ENCODE measurements at regions of chr11 and their contacts with region 1.

Region 1: GRCh38 chr11:62875698-62876478 is 4.8 kb upstream of the SLC3A2 start:
- DNase-seq: no peak
- ATAC-seq: no peak
- H3K4me3 ChIP-seq: no peak overlapping the region
- H3K27ac ChIP-seq: no peak overlapping the region
- H3K4me1 ChIP-seq: peaks cover 14% of the 10 kb centered on the region
- CTCF ChIP-seq: no peak
- EP300 ChIP-seq: no peak
- POLR2A ChIP-seq: no peak
- RAD21 ChIP-seq: no peak

Region 2: DNA sequence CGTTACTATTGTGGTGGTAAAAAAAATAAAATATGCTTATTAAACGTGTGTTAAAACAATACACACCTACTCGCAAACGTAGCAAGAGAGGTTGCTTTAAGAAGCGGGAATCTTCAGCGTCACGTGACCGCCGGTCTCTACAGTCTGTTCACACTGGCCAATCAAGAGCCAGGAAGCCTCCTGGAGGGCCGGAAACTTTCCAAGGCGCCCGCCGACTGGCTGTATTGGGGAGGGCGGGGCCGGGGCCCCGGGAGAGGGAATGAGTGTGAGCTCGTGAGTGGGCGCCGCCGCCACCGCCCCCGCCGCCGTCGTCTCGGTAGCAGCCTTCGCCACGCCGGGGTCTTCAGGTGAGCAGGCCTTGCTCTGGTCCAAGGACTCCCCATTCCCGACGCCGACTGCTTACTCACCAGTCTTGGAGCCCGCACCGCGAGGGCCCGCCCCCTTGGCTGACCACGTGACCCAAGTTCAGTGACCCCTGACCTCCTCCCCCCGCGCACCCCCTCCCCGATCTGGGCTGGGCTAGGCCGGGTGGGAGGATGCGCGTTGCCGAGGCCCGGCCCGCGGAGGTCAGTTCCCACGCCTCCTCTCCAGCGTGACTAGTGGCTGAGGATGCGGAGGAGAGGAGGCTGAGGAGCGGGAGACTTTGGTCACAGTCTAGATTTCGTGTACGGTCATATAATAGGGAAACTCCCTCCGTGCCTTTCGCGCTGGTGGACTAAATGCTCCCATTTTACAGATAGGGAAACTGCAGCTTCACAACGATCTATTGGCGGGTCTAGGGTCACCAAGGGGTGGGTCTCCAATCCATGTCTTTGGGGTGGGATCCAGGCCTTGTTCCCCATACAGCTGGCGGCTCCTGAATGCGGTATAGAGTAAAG is 104.5 kb before region 1 on chr11 and contains the start of gene TAF6L:
- CTCF ChIA-PET with region 1: no interaction called
- POLR2A ChIA-PET with region 1: no interaction called
- DNase-seq: peak; percentile 97 to 98
- ATAC-seq: peak; percentile 96 to 97
- H3K4me3 ChIP-seq: peak within 1 kb of the TSS; percentile 78
- H3K27ac ChIP-seq: peak within 1 kb of the TSS; percentile 93 to 94
- H3K4me1 ChIP-seq: peaks cover 15% of the 10 kb centered on the region
- CTCF ChIP-seq: no peak
- EP300 ChIP-seq: no peak
- POLR2A ChIP-seq: peak; percentile 55
- RAD21 ChIP-seq: no peak
- polyA plus RNA-seq, gene TAF6L: 14.0 and 17.5 TPM in 2 replicates

Region 3: DNA sequence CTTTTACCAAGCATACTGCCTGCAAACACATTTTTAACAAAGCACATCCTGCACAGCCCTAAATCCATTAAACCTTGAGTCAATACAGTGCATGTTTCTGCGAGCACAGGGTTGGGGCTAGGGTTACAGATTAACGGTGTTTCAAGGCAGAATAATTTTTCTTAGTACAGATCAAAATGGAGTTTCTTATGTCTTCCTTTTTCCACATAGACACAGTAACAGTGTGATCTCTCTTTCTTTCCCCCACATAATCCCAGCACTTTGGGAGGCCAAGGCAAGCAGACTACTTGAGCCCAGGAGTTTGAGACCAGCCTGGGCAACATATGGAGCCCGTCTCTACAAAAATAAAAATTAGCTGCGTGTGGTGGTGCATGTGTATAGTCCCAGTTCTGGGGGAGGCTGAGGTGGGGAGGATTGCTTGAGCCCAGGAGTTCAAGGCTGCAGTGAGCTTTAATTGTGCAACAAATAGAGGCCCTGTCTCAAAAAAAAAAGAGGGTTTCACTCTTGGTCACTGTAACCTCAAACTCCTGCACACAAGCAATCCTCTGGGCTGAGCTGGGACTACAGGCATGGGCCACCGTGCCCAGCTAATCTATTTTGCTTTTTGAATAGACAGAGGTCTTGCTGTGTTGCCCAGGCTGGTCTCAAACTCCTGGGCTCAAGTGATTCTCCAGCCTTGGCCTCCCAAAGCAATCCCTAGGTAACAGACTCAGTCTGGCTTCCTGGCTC is 14.9 kb before region 1 on chr11:
- CTCF ChIA-PET with region 1: interaction called, 49 read pairs
- POLR2A ChIA-PET with region 1: interaction called, 42 read pairs
- DNase-seq: no peak
- ATAC-seq: no peak
- H3K4me3 ChIP-seq: no peak overlapping the region
- H3K27ac ChIP-seq: peak overlapping the region in 1 of 2 experiments; percentile 23; a peak in 3 of 6 replicates
- H3K4me1 ChIP-seq: peaks cover 33% of the 10 kb centered on the region
- CTCF ChIP-seq: no peak
- EP300 ChIP-seq: no peak
- POLR2A ChIP-seq: no peak
- RAD21 ChIP-seq: no peak